ENCODE measurements at regions of chr2 and their contacts with region 1.

Region 1: DNA sequence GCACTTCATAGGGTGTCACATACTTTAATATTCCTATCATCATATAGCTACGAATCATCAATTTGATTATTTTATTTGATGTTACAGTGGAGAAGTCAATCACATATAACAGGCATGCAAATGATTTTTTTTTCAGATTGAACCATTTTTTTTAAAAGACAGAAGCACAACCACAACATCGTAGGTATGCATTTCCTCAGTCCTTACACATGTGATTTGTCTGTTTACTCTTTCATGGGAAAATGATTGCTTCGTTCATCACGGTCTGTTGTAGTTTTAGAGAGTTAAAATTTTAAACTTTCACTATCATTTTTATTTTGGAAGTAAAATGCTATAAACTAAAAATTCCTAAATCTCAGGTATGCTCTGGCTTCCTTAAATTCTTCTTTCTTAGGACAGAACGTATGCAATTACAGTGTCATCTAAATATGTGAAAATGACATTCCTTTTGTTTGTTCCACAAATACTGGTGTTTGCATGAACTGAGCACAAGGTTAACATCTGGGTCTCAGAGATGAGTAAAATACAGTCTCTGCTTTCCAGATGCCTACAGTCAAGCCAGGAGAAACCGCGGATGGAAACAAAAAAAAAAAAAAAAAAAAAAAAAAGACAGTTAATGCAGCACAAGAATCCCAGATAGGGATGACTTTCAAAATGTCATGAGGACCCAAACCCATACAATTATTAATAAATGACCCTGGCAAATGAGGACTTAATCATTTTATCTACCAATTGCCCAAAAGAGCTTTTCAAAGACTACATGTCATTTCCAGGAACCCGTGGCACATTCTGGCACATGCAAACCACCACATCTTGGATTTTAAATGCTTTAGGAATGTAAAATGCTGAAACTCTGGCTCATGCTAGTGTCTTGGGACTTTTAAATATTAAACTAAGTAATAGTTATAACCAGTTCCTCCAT is 201.2 kb downstream of the LRP1B start:
- DNase-seq: no peak
- ATAC-seq: no peak
- H3K4me3 ChIP-seq: no peak overlapping the region
- H3K4me3 Mint-ChIP-seq: no peak overlapping the region
- H3K27ac ChIP-seq: no peak overlapping the region
- H3K27ac Mint-ChIP-seq: no peak overlapping the region
- H3K4me1 ChIP-seq: no peaks in the 10 kb centered on the region
- H3K4me1 Mint-ChIP-seq: no peaks in the 10 kb centered on the region
- H3K27me3 ChIP-seq: no peaks in the 10 kb centered on the region
- H3K27me3 Mint-ChIP-seq: no peaks in the 10 kb centered on the region
- CTCF ChIP-seq: no peak

Region 2: GRCh38 chr2:141438536-141438935 is 491.1 kb before region 1 on chr2:
- CTCF ChIA-PET with region 1: no interaction called
- POLR2A ChIA-PET with region 1: no interaction called
- intact Hi-C with region 1: no loop called
- DNase-seq: no peak
- ATAC-seq: no peak
- H3K4me3 ChIP-seq: no peak overlapping the region
- H3K4me3 Mint-ChIP-seq: no peak overlapping the region
- H3K27ac ChIP-seq: no peak overlapping the region
- H3K27ac Mint-ChIP-seq: no peak overlapping the region
- H3K4me1 ChIP-seq: no peaks in the 10 kb centered on the region
- H3K4me1 Mint-ChIP-seq: no peaks in the 10 kb centered on the region
- H3K27me3 ChIP-seq: no peaks in the 10 kb centered on the region
- H3K27me3 Mint-ChIP-seq: no peaks in the 10 kb centered on the region
- CTCF ChIP-seq: no peak

Region 3: DNA sequence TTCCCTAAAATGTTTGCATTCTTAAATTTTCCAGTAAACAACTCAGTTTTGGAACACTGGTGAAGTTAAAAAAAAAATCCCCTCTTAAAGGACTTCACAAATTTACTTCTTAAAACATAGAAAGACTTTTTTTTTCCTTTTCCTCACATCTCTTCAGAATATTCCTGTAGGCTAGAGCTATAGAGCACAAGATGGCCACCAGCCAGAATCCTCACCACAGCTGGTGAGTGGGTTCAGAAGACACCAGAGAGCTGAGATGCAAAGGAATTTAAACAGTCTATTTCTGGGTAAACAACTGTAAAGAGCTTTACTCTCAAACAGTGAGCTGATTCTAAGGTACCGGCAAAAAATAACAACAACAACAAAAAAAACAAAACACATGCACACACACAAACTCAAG is 51.6 kb before region 1 on chr2:
- CTCF ChIA-PET with region 1: no interaction called
- POLR2A ChIA-PET with region 1: no interaction called
- intact Hi-C with region 1: no loop called
- DNase-seq: no peak
- ATAC-seq: no peak
- H3K4me3 ChIP-seq: no peak overlapping the region
- H3K4me3 Mint-ChIP-seq: no peak overlapping the region
- H3K27ac ChIP-seq: no peak overlapping the region
- H3K27ac Mint-ChIP-seq: no peak overlapping the region
- H3K4me1 ChIP-seq: no peaks in the 10 kb centered on the region
- H3K4me1 Mint-ChIP-seq: no peaks in the 10 kb centered on the region
- H3K27me3 ChIP-seq: no peaks in the 10 kb centered on the region
- H3K27me3 Mint-ChIP-seq: no peaks in the 10 kb centered on the region
- CTCF ChIP-seq: no peak

Region 4: GRCh38 chr2:141946016-141946415 is 16.4 kb after region 1 on chr2:
- CTCF ChIA-PET with region 1: no interaction called
- POLR2A ChIA-PET with region 1: no interaction called
- intact Hi-C with region 1: loop called in 1 of 2 experiments (anchors 2 kb)
- DNase-seq: no peak
- ATAC-seq: no peak
- H3K4me3 ChIP-seq: no peak overlapping the region
- H3K4me3 Mint-ChIP-seq: no peak overlapping the region
- H3K27ac ChIP-seq: no peak overlapping the region
- H3K27ac Mint-ChIP-seq: no peak overlapping the region
- H3K4me1 ChIP-seq: no peaks in the 10 kb centered on the region
- H3K4me1 Mint-ChIP-seq: no peaks in the 10 kb centered on the region
- H3K27me3 ChIP-seq: no peaks in the 10 kb centered on the region
- H3K27me3 Mint-ChIP-seq: no peaks in the 10 kb centered on the region
- CTCF ChIP-seq: no peak